ENCODE measurements at regions of chr17 and their contacts with region 1.

Region 1: DNA sequence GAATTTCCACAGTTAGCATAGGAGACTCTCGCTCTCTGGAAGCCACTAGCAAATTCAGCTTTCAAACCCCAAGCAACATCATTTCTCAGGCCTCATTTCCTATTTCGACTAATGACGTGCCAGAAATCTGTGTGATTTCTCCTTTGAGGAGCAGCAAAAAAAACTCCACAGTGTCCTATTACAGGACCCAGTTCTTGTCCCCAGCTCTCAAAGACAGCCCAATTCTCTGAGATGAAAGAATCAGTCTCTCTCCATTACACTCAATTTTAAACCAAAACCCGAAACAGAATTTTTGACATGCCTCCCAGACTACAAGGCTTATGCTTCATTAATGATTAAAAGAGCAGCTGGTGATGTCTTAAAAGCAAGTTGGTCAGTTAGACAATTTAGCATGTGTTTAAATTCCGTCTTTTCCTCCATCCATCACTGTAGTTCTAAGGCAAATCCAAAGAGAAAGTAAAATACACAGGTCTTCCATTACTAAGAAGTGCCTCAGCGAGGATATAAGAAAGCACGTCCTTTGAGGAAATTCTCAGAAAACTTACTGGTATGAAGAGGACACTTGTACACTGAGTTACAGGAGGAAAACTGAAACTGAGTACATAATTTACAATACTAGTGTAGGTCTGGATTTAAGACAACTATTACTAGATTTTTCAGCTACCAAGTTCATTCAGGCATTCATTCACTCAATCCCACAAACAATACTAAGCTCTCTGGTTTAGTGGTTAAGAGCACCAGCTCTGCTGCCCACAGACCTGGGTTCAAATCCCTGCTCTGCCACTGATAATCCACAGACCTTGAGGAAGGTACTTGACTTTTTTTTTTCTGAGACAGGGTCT is 12.5 kb downstream of the TOM1L2 start:
- DNase-seq: peak; percentile 63
- H3K4me3 Mint-ChIP-seq: peak overlapping the region; percentile 78
- H3K27ac Mint-ChIP-seq: peak overlapping the region; percentile 99
- H3K4me1 Mint-ChIP-seq: peaks cover 53% of the 10 kb centered on the region
- H3K27me3 Mint-ChIP-seq: no peaks in the 10 kb centered on the region

Region 2: GRCh38 chr17:17783116-17783824 is 176.5 kb before region 1 on chr17:
- CTCF ChIA-PET with region 1: no interaction called
- POLR2A ChIA-PET with region 1: no interaction called
- intact Hi-C with region 1: no loop called
- DNase-seq: peak; percentile 75
- H3K4me3 Mint-ChIP-seq: peak overlapping the region; percentile 67
- H3K27ac Mint-ChIP-seq: no peak overlapping the region
- H3K4me1 Mint-ChIP-seq: peaks cover 7% of the 10 kb centered on the region
- H3K27me3 Mint-ChIP-seq: no peaks in the 10 kb centered on the region

Region 3: GRCh38 chr17:17890773-17891759 is 68.7 kb before region 1 on chr17:
- CTCF ChIA-PET with region 1: no interaction called
- POLR2A ChIA-PET with region 1: no interaction called
- intact Hi-C with region 1: no loop called
- DNase-seq: peak; percentile 66
- H3K4me3 Mint-ChIP-seq: no peak overlapping the region
- H3K27ac Mint-ChIP-seq: no peak overlapping the region
- H3K4me1 Mint-ChIP-seq: no peaks in the 10 kb centered on the region
- H3K27me3 Mint-ChIP-seq: no peaks in the 10 kb centered on the region

Region 4: GRCh38 chr17:17947966-17948365 is 11.8 kb before region 1 on chr17:
- CTCF ChIA-PET with region 1: no interaction called
- POLR2A ChIA-PET with region 1: interaction called, 7 read pairs
- intact Hi-C with region 1: loop called (anchors 1 kb)
- DNase-seq: no peak
- H3K4me3 Mint-ChIP-seq: no peak overlapping the region
- H3K27ac Mint-ChIP-seq: no peak overlapping the region
- H3K4me1 Mint-ChIP-seq: peaks cover 23% of the 10 kb centered on the region
- H3K27me3 Mint-ChIP-seq: no peaks in the 10 kb centered on the region

Region 5: GRCh38 chr17:17972126-17972951 is 12.6 kb after region 1 on chr17 and contains the starts of genes DRC3 and TOM1L2:
- CTCF ChIA-PET with region 1: interaction called, 8 read pairs
- POLR2A ChIA-PET with region 1: interaction called, 30 read pairs
- intact Hi-C with region 1: loop called (anchors 1 kb)
- DNase-seq: peak; percentile 100
- H3K4me3 Mint-ChIP-seq: peak within 1 kb of the TSS; percentile 91
- H3K27ac Mint-ChIP-seq: peak within 1 kb of the TSS; percentile 78
- H3K4me1 Mint-ChIP-seq: peaks cover 35% of the 10 kb centered on the region
- H3K27me3 Mint-ChIP-seq: no peaks in the 10 kb centered on the region
- total RNA-seq, gene DRC3: 0.34 to 0.52 TPM
- total RNA-seq, gene TOM1L2: 11.1 to 12.7 TPM

Region 6: GRCh38 chr17:17994271-17995069 is 34.7 kb after region 1 on chr17:
- CTCF ChIA-PET with region 1: no interaction called
- POLR2A ChIA-PET with region 1: no interaction called
- intact Hi-C with region 1: loop called (anchors 1 kb)
- DNase-seq: peak; percentile 15
- H3K4me3 Mint-ChIP-seq: no peak overlapping the region
- H3K27ac Mint-ChIP-seq: no peak overlapping the region
- H3K4me1 Mint-ChIP-seq: no peaks in the 10 kb centered on the region
- H3K27me3 Mint-ChIP-seq: no peaks in the 10 kb centered on the region

Measured in activated CD4-positive, alpha-beta memory T cell treated with anti-CD3 and anti-CD28 coated beads for 36 hours (primary cell).